ENCODE measurements at regions of chr1 and their contacts with region 1.

Region 1: DNA sequence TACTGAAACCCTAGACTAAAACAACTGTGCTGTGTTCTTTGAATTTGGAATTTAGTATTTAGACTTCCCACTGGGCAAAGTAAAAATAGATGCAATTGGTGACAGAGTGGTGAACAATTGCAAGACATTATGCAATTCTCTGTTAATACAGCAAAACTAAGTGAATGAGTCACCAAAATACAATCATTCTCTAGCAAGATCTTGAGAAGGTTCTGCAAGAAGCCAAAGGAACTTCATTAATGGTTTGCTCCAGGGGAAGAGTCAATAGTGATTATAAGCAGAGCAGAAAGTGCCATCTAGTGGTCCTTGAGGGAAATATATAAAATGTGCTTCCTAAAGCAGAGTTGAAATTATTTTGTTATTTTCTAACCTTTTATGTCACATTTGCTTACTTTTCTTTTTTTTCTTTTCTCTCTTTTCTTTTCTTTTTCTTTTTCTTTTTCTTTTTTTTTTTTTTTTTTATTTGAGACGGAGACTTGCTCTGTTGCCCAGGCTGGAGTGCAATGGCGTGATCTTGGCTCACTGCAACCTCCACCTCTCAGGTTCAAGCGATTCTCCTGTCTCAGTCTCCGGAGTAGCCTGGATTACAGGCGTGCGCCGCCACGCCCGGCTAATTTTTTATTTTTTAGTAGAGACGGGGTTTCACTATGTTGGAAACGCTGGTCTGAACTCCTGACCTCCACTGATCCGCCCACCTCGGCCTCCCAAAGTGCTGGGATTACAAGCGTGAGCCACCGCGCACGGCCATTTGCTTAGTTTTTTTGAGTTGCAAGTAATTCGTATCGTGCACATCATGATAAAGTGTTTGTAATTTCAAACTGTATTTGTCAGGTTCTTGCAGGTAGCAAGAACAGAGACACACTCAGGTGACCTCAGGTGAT is 99.2 kb downstream of the CTH start:
- DNase-seq: no peak
- H3K4me3 ChIP-seq: no peak overlapping the region
- H3K27ac ChIP-seq: no peak overlapping the region
- H3K4me1 ChIP-seq: no peaks in the 10 kb centered on the region
- H3K27me3 ChIP-seq: no peaks in the 10 kb centered on the region
- CTCF ChIP-seq: peak in 3 of 4 experiments; percentile 52 to 79 (median 75)
- POLR2A ChIP-seq: no peak

Region 2: GRCh38 chr1:70134148-70134547 is 376.1 kb before region 1 on chr1:
- intact Hi-C with region 1: loop called (anchors 10 kb)
- DNase-seq: no peak
- H3K4me3 ChIP-seq: no peak overlapping the region
- H3K27ac ChIP-seq: no peak overlapping the region
- H3K4me1 ChIP-seq: no peaks in the 10 kb centered on the region
- H3K27me3 ChIP-seq: no peaks in the 10 kb centered on the region
- CTCF ChIP-seq: no peak
- POLR2A ChIP-seq: no peak

Region 3: GRCh38 chr1:70436622-70437251 is 73.5 kb before region 1 on chr1:
- intact Hi-C with region 1: loop called (anchors 10 kb)
- DNase-seq: no peak
- H3K4me3 ChIP-seq: no peak overlapping the region
- H3K27ac ChIP-seq: no peak overlapping the region
- H3K4me1 ChIP-seq: no peaks in the 10 kb centered on the region
- H3K27me3 ChIP-seq: no peaks in the 10 kb centered on the region
- CTCF ChIP-seq: peak in 1 of 4 experiments; percentile 25
- POLR2A ChIP-seq: no peak

Region 4: GRCh38 chr1:70627910-70628309 is 117.7 kb after region 1 on chr1:
- intact Hi-C with region 1: no loop called
- DNase-seq: no peak
- H3K4me3 ChIP-seq: no peak overlapping the region
- H3K27ac ChIP-seq: no peak overlapping the region
- H3K4me1 ChIP-seq: no peaks in the 10 kb centered on the region
- H3K27me3 ChIP-seq: no peaks in the 10 kb centered on the region
- CTCF ChIP-seq: no peak
- POLR2A ChIP-seq: no peak

Measured in prostate gland (tissue), 2 donors.